ENCODE measurements at regions of chr16 and their contacts with region 1.

Region 1: DNA sequence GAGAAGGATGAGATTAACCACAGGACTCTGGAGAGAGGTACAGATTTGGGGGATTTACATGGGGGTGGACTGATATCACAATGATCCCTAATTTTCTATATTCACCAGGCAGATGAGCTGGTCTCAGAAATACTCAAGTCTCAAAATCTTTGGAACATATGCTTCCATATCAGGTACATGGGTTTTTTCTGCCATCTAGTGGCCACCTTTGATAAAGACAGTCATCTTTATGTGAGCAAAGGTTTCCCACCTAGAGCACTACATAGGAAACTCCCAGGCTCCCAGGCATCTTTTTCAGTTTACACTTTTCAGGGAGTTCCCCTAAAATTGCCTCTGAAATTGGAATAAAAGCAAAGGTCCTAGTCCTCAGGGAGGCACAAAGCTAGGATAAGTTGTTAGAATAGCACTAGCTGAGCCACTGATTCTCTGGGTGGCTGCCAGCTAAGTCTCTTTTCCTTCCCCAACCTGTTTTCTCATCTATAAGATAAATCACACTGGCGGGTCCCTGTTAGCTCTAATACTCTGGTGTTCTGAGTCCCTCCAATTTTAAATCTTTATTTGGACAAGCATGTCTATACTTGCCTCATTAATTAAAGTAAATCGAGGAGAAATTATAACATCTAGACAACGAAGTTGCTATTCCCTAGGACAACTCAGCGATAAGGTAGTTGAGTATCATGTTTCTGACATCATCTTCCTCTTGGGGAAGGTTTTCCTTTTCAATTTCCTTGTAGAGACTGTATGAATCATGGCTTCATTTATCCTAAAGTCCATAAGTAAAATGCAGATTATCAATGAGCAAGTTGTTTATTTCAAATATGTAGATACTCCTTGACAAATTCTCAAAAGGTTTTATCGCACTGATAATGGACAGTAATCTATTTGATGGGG is 19.0 kb upstream of the MON1B start:
- DNase-seq: peak; percentile 65 to 70
- ATAC-seq: peak; percentile 84 to 92
- H3K4me3 ChIP-seq: no peak overlapping the region
- H3K27ac ChIP-seq: no peak overlapping the region
- H3K4me1 ChIP-seq: no peaks in the 10 kb centered on the region
- CTCF ChIP-seq: peak; percentile 87
- EP300 ChIP-seq: no peak
- POLR2A ChIP-seq: no peak
- RAD21 ChIP-seq: peak; percentile 88 to 89

Region 2: GRCh38 chr16:75787440-75787839 is 1384.5 kb before region 1 on chr16:
- CTCF ChIA-PET with region 1: interaction called, 55 read pairs
- POLR2A ChIA-PET with region 1: no interaction called
- DNase-seq: no peak
- ATAC-seq: no peak
- H3K4me3 ChIP-seq: no peak overlapping the region
- H3K27ac ChIP-seq: no peak overlapping the region
- H3K4me1 ChIP-seq: no peaks in the 10 kb centered on the region
- CTCF ChIP-seq: no peak
- EP300 ChIP-seq: no peak
- POLR2A ChIP-seq: no peak
- RAD21 ChIP-seq: no peak

Region 3: GRCh38 chr16:76007649-76008048 is 1164.3 kb before region 1 on chr16:
- CTCF ChIA-PET with region 1: no interaction called
- POLR2A ChIA-PET with region 1: no interaction called
- DNase-seq: no peak
- ATAC-seq: no peak
- H3K4me3 ChIP-seq: no peak overlapping the region
- H3K27ac ChIP-seq: no peak overlapping the region
- H3K4me1 ChIP-seq: no peaks in the 10 kb centered on the region
- CTCF ChIP-seq: no peak
- EP300 ChIP-seq: no peak
- POLR2A ChIP-seq: no peak
- RAD21 ChIP-seq: no peak

Region 4: GRCh38 chr16:76278980-76279379 is 893.0 kb before region 1 on chr16:
- CTCF ChIA-PET with region 1: interaction called, 55 read pairs
- POLR2A ChIA-PET with region 1: no interaction called
- DNase-seq: peak in 1 of 2 experiments; percentile 26
- ATAC-seq: peak; percentile 54 to 59; a peak in 2 of 6 replicates
- H3K4me3 ChIP-seq: no peak overlapping the region
- H3K27ac ChIP-seq: no peak overlapping the region
- H3K4me1 ChIP-seq: no peaks in the 10 kb centered on the region
- CTCF ChIP-seq: peak; percentile 20; the same call in 1 of the 3 replicates
- EP300 ChIP-seq: no peak
- POLR2A ChIP-seq: no peak
- RAD21 ChIP-seq: peak; percentile 43 to 45; a peak in 3 of 5 replicates

Region 5: GRCh38 chr16:76653390-76654026 is 518.5 kb before region 1 on chr16:
- CTCF ChIA-PET with region 1: interaction called, 16 read pairs
- POLR2A ChIA-PET with region 1: no interaction called
- DNase-seq: peak; percentile 32 to 66
- ATAC-seq: peak; percentile 88 to 90
- H3K4me3 ChIP-seq: no peak overlapping the region
- H3K27ac ChIP-seq: no peak overlapping the region
- H3K4me1 ChIP-seq: peaks cover 11% of the 10 kb centered on the region
- CTCF ChIP-seq: peak; percentile 64
- EP300 ChIP-seq: no peak
- POLR2A ChIP-seq: no peak
- RAD21 ChIP-seq: peak; percentile 72 to 78

Region 6: DNA sequence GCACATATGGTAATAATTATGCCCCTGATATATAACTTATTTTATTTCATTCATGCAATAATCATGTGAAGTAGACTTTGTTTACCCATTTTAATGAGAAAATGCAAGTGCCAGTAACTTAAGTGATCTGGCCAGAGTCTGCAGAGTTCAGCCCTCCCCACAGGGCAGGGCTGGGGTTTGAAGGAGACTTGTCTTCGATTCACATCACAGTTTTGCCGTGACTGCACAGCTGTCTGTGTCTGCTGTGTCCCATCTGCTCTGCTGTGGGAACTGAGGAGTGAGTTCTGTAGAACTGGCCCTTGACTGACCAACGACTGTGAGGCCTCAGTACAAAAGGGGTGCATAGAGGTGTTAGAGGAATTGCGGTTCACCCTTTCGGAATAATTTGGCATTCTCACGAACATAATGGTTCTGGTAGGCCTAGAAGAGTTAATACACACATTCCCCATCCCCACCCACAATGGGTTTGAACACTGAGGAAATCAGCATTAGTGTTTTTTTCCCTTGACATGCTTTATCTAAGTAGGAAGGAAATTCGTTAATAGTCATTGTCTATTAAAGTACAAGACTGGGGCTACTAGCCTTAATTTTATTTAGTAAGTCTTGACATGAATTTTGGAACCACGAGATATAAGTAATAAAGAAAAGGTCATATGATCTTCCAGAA is 94.6 kb before region 1 on chr16:
- CTCF ChIA-PET with region 1: no interaction called
- POLR2A ChIA-PET with region 1: no interaction called
- DNase-seq: no peak
- ATAC-seq: no peak
- H3K4me3 ChIP-seq: no peak overlapping the region
- H3K27ac ChIP-seq: no peak overlapping the region
- H3K4me1 ChIP-seq: no peaks in the 10 kb centered on the region
- CTCF ChIP-seq: no peak
- EP300 ChIP-seq: no peak
- POLR2A ChIP-seq: no peak
- RAD21 ChIP-seq: no peak

Region 7: DNA sequence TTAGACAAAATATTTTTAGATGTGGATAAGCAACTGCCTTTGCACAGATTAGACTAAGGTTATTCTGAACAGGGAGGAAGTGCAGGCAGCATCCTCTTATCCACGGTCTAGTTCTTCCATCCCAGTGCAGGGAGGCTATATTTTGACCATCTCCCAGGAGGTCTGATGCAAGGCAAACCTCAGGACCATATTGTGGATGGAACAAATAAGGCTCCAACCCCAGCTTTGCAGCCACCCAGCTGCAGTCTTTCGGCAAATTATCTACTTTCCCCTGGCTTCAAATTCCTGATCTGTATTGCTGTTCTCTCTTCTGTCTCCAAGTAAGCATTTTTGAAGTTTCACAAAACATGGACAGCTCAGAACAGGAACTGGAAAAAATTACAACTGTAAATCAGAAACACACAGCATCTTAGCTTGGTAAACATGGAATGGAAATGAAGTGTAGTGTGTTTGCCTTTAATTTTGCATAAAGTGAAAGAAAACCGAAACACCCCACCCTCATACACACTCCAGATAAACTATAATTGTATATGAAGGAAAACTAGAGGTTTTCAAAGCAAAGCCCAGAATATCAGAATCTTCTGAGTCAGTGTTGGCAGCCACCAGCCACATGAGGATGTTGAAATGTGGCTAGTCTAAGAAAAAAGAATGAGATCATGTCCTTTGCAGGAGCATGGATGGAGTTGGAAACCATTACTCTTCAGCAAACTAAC is 14.5 kb before region 1 on chr16:
- CTCF ChIA-PET with region 1: interaction called, 26 read pairs
- POLR2A ChIA-PET with region 1: no interaction called
- DNase-seq: no peak
- ATAC-seq: no peak
- H3K4me3 ChIP-seq: no peak overlapping the region
- H3K27ac ChIP-seq: no peak overlapping the region
- H3K4me1 ChIP-seq: no peaks in the 10 kb centered on the region
- CTCF ChIP-seq: no peak
- EP300 ChIP-seq: no peak
- POLR2A ChIP-seq: no peak
- RAD21 ChIP-seq: no peak

Region 8: DNA sequence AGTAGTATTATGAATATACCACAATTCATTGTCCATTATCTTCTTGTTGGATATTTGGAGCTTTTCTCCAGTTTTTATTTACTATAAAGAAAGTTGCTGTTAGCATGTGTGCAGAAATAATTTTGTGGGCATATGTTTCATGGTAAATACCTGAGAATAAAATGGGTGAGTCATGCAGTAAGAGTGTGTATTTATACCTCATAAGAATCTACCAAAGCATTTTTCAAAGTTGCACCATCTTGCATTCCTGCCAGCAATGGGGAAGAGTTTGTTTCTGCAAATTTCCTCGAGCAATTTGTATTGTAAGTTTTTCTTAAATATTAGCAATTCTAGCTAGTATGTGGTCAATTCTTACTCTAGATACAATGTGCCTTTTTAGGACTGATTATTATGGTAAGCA is 11.1 kb after region 1 on chr16:
- CTCF ChIA-PET with region 1: interaction called, 41 read pairs
- POLR2A ChIA-PET with region 1: no interaction called
- DNase-seq: no peak
- ATAC-seq: peak in 1 of 2 experiments; percentile 39; a peak in 1 of 6 replicates
- H3K4me3 ChIP-seq: no peak overlapping the region
- H3K27ac ChIP-seq: no peak overlapping the region
- H3K4me1 ChIP-seq: peaks cover 7% of the 10 kb centered on the region; the same call in 2 of the 3 replicates
- CTCF ChIP-seq: no peak
- EP300 ChIP-seq: no peak
- POLR2A ChIP-seq: no peak
- RAD21 ChIP-seq: no peak

Region 9: DNA sequence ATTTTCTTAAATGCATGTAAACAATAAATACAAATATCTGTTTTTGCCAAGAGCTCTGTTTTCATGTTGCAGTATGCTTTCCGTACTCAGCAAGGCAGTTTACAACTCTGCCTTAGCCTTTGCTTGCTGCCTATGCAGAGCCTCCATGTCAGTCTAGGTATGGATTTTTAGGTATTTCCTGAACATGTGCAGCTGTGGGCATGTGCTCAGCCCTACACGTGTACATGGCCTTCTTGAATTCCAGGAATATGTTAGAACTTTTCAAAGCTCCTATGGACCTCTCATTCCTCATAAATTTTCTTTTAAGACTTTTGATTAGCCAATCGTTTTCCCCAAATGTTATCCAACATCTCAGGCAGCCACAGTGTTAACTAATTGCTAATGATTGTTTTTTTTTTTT is 91.0 kb after region 1 on chr16:
- CTCF ChIA-PET with region 1: no interaction called
- POLR2A ChIA-PET with region 1: no interaction called
- DNase-seq: no peak
- ATAC-seq: no peak
- H3K4me3 ChIP-seq: no peak overlapping the region
- H3K27ac ChIP-seq: no peak overlapping the region
- H3K4me1 ChIP-seq: no peaks in the 10 kb centered on the region; the same call in 2 of the 3 replicates
- CTCF ChIP-seq: no peak
- EP300 ChIP-seq: no peak
- POLR2A ChIP-seq: no peak
- RAD21 ChIP-seq: no peak

Region 10: DNA sequence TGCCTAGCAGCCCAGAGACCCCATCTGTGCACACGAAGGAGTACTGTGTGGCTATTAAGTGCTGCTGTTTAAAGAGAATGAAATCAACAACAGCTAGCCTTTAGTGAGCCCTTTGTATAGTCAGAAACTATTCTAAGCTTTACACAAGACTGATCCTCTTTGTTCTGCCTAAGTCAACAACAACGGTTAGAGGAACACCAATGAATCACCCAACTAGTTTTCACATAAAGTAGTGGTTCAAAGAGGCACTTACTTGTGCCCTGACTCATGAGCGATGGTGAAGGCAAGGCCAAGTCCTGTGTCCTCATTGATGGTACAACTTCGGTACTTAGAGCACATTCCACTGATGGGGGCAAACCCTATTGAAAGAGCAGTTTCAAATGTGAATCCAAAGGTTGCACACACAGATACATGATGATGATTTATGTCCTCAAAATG is 187.1 kb after region 1 on chr16:
- CTCF ChIA-PET with region 1: no interaction called
- POLR2A ChIA-PET with region 1: no interaction called
- DNase-seq: peak; percentile 64 to 91
- ATAC-seq: peak; percentile 99
- H3K4me3 ChIP-seq: 0 out of 3 replicates have a peak overlapping the region, but pooled peaks have one; percentile 2
- H3K27ac ChIP-seq: peak overlapping the region; percentile 67 to 74
- H3K4me1 ChIP-seq: peaks cover 34% of the 10 kb centered on the region
- CTCF ChIP-seq: no peak
- EP300 ChIP-seq: peak; percentile 60 to 74; a peak in 2 of 5 replicates
- POLR2A ChIP-seq: no peak
- RAD21 ChIP-seq: peak; percentile 41 to 52; a peak in 3 of 5 replicates